ENCODE measurements at regions of chr5 and their contacts with region 1.

Region 1: DNA sequence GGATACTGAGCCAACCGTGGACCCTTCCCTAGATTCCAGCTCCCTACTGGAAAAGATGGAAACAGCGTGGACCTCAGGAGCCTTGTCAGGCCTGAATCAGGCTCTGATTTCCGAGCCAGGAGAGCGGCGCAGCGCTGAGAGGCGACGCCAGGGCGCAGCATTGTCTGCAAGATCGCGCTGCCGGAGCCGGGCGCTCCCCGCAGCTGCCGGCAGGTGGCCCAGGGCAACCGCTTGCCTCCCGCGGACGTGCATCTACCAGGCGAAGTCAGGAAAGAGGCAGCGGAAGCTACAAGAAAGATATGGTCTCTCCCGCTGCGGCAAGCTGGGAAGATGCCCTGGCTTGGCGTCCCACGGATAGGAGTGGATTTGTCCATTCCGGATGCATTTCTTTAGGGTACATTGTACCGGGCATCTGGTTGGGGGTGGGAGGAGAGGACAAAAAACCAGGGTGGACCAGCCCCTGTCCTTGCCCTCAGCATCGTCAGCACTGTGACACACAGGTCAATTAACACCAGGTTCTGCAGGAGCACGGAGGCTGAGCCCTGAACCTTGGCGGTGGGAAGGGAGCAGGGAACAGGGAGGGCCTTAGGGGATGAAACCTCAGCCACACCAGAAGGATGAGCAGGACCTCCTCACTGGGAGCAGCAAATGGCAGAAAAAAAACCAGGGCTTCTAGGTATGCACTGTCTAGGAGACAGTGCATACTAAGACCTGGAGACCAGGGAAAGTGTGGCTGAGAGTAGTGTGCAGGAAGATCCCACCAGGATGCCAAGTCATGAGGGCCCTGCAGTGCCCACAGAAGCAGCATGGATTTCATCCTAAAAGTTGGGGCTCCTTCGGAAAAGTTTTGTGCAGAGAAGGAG is 55.9 kb downstream of the SFXN1 start:
- DNase-seq: peak; percentile 94

Region 2: DNA sequence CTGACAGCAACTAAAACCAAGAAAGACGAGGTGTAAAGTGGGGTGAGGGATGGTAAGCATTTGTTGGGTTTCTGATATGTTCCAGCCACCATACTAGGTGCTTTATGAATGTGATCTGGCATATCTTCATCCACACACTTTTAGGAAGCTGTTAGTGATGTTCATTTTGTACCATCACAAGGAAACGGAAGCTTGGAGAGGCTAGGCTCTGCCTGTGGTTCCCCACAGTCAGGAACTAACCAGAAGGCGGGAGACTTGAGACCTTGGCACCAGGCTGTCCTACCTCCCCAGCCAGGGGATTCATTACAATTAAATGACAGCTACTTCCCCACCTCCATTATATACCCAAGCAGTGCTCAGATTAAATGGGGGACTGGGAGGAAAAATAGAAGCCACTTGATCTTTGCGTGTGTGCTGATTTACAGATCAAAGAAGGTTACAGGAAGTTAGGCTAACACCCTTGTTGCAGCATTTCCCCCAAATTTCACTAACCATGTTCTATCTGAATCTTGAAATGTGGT is 12.9 kb before region 1 on chr5:
- CTCF ChIA-PET with region 1: interaction called, 12 read pairs
- POLR2A ChIA-PET with region 1: no interaction called
- DNase-seq: no peak

Region 3: DNA sequence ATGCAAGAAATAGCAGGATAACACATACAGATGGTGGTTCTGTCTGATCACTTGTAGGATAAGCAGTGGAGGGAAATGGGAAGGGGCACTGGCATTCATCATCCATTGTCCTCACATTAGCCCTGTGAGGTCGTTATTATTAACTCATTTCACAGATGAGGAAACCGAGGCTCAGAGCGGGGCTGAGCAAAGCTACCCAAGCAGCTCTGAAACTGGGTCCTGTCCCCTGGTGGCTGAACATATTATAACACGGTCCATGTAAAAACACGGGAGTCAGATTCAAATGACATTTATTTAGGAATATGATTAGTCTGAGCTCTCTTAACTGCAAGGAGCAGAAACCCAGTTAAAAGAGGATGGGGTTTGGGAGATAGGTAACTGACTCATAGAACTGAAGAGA is 166.7 kb after region 1 on chr5:
- CTCF ChIA-PET with region 1: interaction called, 11 read pairs
- POLR2A ChIA-PET with region 1: no interaction called
- DNase-seq: peak; percentile 41

Region 4: GRCh38 chr5:175718401-175719108 is 184.3 kb after region 1 on chr5:
- CTCF ChIA-PET with region 1: interaction called, 13 read pairs
- POLR2A ChIA-PET with region 1: no interaction called
- DNase-seq: peak; percentile 45

Region 5: DNA sequence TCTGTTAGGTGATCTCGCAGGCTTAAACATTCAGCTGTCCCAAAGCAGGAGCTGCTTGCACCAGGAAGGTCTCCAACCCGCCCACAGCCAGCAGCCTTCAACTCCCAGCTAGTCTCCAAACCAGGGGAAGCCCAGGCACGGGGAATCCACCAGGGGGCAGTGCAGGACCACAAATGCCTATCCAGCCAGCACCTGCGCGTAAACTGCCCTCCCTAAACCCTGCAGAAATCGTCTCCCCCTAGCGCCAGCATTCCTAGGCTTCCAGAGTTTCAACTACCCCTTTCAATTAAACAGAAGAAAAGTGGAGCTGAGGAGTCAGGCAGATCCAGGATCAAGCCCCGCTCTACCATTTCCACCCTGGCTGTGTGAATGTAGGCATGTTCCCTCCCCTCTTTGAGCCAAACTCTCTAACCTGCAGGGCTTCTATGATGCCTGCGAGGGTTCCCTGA is 195.6 kb after region 1 on chr5:
- CTCF ChIA-PET with region 1: interaction called, 16 read pairs
- POLR2A ChIA-PET with region 1: no interaction called
- DNase-seq: peak; percentile 97